ENCODE measurements at regions of chr7 and their contacts with region 1.

Region 1: DNA sequence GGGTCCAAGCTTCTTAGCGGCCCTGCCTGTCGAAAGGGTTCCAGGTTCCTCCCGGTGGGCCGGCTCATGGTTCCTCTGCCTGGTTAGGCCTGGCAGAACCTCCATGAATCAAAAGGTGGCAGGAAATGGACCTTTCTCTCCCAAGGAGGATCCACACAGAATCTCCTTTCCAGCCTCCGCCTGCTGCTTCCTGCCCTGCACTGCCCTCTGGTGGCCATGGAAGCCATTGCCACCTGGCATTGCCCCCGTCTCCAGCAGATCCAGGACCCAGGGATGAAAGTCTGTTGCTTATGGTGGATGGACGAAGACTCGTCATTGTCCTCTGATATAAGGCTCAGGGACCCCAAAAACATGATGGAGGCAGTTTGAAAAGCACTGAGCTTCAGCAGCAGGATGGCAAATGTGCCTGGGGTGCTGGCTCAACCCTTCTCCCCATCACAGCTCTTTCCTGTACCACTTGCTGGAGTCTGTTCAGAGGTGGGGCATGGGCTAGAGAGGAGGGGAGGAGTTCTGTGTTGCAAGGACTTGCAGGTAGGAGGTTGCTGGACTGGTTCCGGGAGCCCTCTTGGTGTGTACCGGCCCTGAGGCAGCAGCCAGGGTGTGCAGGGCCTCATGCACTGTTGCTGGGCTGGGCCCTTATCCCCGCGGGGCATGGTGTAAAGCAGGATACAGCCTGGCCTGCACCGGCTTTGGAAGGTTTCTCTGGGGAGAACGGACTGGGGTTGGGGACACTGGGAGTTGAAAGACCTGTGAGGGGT is 11.3 kb upstream of the INMT start:
- DNase-seq: peak; percentile 76 to 82
- ATAC-seq: peak; percentile 55 to 88 (median 73)
- H3K4me3 ChIP-seq: no peak overlapping the region
- H3K27ac ChIP-seq: no peak overlapping the region
- H3K4me1 ChIP-seq: peaks cover 0 to 24% (median 5%) of the 10 kb centered on the region in 9 donors
- H3K27me3 ChIP-seq: no peaks in the 10 kb centered on the region
- CTCF ChIP-seq: peak; percentile 96 to 100 (median 99)

Region 2: GRCh38 chr7:30548762-30549344 is 191.8 kb before region 1 on chr7:
- intact Hi-C with region 1: loop called in 1 of 10 experiments (anchors 2 kb)
- DNase-seq: peak; percentile 26 to 75
- ATAC-seq: peak; percentile 50 to 85 (median 78)
- H3K4me3 ChIP-seq: no peak overlapping the region
- H3K27ac ChIP-seq: peak overlapping the region in 8 of 10 donors; percentile 61 to 84 (median 67)
- H3K4me1 ChIP-seq: peaks cover 0 to 34% (median 22%) of the 10 kb centered on the region in 9 donors
- H3K27me3 ChIP-seq: no peaks in the 10 kb centered on the region
- CTCF ChIP-seq: peak; percentile 64 to 90 (median 85)

Region 3: DNA sequence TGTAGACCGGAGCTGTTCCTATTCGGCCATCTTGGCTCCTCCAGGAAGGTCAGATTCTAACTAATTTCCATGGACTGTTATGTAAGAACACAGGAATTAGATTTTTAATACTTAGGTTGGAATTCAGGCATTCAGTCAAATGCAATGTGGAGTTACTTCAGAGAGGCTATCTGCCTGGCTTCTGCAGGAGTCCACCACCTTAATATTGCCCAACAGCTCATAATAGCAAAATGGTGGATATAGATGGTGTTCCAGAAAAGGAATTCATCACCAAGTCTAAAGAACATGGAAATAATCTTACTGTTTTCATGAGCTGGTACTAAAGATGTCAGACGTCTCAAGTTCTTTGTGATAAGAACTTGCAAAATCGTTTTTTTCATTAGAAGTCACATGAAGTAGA is 97.8 kb before region 1 on chr7:
- intact Hi-C with region 1: no loop called
- DNase-seq: no peak
- ATAC-seq: no peak
- H3K4me3 ChIP-seq: no peak overlapping the region
- H3K27ac ChIP-seq: no peak overlapping the region
- H3K4me1 ChIP-seq: no peaks in the 10 kb centered on the region
- H3K27me3 ChIP-seq: no peaks in the 10 kb centered on the region
- CTCF ChIP-seq: no peak

Region 4: DNA sequence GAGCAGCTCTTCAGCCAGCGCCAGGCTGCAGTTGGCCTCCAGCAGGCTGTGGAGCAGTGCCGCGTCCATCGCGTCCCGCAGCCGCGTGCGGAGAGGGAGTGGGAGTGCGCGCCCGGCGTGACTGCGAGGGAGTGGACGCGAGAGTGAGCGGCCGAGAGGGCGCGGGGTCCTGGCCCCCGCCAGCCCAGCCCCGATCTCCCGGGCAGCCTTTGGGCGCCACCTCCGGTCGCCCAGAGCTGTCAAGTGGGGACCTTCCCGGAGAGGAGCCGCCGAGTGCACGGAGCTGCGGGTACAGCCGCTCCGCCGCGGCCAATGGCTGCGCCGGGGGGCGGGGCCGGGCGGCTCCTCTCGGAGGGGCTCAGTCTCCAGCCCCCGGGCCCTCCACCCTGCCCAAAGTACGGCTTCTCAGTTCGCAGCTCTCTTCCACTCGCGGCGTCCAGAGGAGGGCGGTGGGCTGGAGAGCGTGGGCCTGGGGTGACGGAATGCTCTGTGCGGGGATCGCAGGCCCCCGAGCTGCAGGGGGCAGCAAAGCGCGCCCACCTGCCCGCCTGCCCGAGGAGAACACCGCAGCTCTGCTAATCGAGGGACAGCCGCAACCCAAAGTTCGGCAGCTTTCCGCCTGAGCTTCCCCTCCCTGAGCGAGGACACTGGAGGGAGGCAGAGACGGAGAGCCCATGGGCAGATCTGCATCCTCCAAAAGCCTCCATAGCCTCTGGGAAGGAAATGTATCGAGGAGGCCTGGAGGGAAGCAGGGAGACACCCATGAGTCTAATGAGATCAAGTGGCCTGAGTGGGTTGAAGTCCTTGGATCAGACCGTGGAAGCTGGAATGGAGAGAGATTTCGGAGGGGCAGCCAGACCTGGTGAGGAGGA is 58.2 kb before region 1 on chr7 and contains the start of gene CRHR2:
- intact Hi-C with region 1: loop called in 7 of 10 experiments (anchors 2 to 10 kb)
- DNase-seq: peak; percentile 19 to 52
- ATAC-seq: peak; percentile 62 to 80 (median 73)
- H3K4me3 ChIP-seq: peak within 1 kb of the TSS; percentile 29 to 63 (median 54)
- H3K27ac ChIP-seq: peak within 1 kb of the TSS in 4 of 10 donors; percentile 0 to 32 (median 19)
- H3K4me1 ChIP-seq: peaks cover 2 to 26% (median 16%) of the 10 kb centered on the region in 9 donors
- H3K27me3 ChIP-seq: peaks cover 15 to 75% (median 62%) of the 10 kb centered on the region in 7 donors
- CTCF ChIP-seq: peak in 8 of 9 donors; percentile 14 to 74 (median 56)
- total RNA-seq, gene CRHR2: 0.07 to 1.0 (median 0.28) TPM in 9 of 10 donors, not detected in the other

Region 5: GRCh38 chr7:30791114-30791779 is 50.6 kb after region 1 on chr7:
- intact Hi-C with region 1: loop called in 7 of 10 experiments (anchors 1 to 10 kb)
- DNase-seq: no peak
- ATAC-seq: peak in 6 of 8 donors; percentile 28 to 62 (median 35)
- H3K4me3 ChIP-seq: no peak overlapping the region
- H3K27ac ChIP-seq: peak overlapping the region in 1 of 10 donors; percentile 17
- H3K4me1 ChIP-seq: peaks cover 0 to 23% (median 12%) of the 10 kb centered on the region in 9 donors
- H3K27me3 ChIP-seq: no peaks in the 10 kb centered on the region
- CTCF ChIP-seq: peak in 7 of 9 donors; percentile 22 to 51 (median 28)

Region 6: GRCh38 chr7:30938435-30939316 is 198.1 kb after region 1 on chr7:
- intact Hi-C with region 1: loop called in 1 of 10 experiments (anchors 10 kb)
- DNase-seq: peak; percentile 84 to 90
- ATAC-seq: peak; percentile 68 to 91 (median 84)
- H3K4me3 ChIP-seq: peak overlapping the region in 7 of 10 donors; percentile 1 to 37 (median 26)
- H3K27ac ChIP-seq: peak overlapping the region in 1 of 10 donors; percentile 1
- H3K4me1 ChIP-seq: peaks cover 2 to 32% (median 15%) of the 10 kb centered on the region in 9 donors
- H3K27me3 ChIP-seq: peaks cover 0 to 21% (median 0%) of the 10 kb centered on the region in 7 donors
- CTCF ChIP-seq: peak; percentile 95 to 99 (median 99)

Measured in heart right ventricle (tissue), 16 donors.